Esophagus muscularis mucosa (tissue), 4 donors: ENCODE measurements at regions of chr12 and their contacts with region 1.

Region 1: GRCh38 chr12:111313833-111314259 is 55.0 kb downstream of the PHETA1 start:
- DNase-seq: no peak
- H3K4me3 ChIP-seq: peak overlapping the region in 3 of 4 donors; percentile 1 to 23 (median 3)
- H3K27ac ChIP-seq: no peak overlapping the region
- H3K4me1 ChIP-seq: peaks cover 0 to 5% (median 2%) of the 10 kb centered on the region in 4 donors
- H3K27me3 ChIP-seq: peaks cover 0 to 52% (median 0%) of the 10 kb centered on the region in 4 donors
- CTCF ChIP-seq: peak; percentile 84 to 96 (median 88)
- EP300 ChIP-seq: no peak
- POLR2A ChIP-seq: no peak

Region 2: DNA sequence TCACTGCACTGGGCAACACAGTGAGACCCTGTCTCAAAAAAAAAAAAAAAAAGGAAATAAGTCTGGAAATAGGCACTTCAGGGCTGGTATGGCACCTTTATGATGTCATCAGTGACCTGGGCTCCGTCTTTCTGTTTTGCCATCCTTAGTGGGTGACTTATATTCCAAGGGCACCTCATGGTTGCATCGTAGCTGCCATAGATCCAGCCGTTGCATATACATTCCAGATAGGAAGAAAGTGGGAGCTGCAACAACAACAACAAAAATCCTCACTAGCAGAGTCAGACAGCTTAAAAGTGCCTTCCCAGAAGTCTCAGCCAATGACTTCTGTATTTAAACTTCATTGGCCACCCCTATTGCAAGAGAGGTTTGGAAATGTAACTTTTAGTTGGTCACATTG is 419.9 kb before region 1 on chr12:
- intact Hi-C with region 1: loop called (anchors 2 kb)
- DNase-seq: no peak
- H3K4me3 ChIP-seq: no peak overlapping the region
- H3K27ac ChIP-seq: no peak overlapping the region
- H3K4me1 ChIP-seq: peaks cover 5 to 9% (median 6%) of the 10 kb centered on the region in 4 donors
- H3K27me3 ChIP-seq: peaks cover 0 to 9% (median 0%) of the 10 kb centered on the region in 4 donors
- CTCF ChIP-seq: no peak
- EP300 ChIP-seq: no peak
- POLR2A ChIP-seq: no peak

Region 3: DNA sequence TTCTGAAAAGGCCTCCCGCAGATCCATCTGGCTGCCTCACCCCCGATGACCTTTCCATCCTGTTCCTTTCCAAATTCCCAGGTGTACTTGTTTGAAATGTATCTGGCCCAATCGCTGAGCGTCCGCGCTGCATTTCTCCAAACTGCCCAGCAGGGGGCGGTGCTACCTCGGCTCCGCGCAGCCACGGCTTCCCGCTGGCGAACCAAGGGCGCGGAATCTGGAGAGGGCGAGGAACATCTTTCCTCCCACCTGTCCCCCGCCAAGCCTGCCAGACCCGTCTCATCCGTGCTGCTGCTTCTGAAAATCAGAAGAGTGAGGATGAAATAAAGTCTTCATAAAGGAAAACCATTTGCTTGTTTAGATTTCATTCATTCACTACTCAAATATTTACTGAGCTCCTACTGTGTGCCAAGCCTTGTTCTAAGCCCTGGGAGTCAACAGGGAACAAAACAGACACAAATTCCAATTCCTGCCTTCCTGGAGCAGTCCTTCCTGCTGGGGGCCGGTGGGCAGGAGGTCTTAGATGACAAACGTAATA is 376.7 kb before region 1 on chr12:
- intact Hi-C with region 1: loop called (anchors 5 kb)
- DNase-seq: no peak
- H3K4me3 ChIP-seq: no peak overlapping the region
- H3K27ac ChIP-seq: no peak overlapping the region
- H3K4me1 ChIP-seq: peaks cover 7 to 22% (median 14%) of the 10 kb centered on the region in 4 donors
- H3K27me3 ChIP-seq: peaks cover 0 to 53% (median 0%) of the 10 kb centered on the region in 4 donors
- CTCF ChIP-seq: peak; percentile 86 to 96 (median 90)
- EP300 ChIP-seq: no peak
- POLR2A ChIP-seq: no peak

Region 4: DNA sequence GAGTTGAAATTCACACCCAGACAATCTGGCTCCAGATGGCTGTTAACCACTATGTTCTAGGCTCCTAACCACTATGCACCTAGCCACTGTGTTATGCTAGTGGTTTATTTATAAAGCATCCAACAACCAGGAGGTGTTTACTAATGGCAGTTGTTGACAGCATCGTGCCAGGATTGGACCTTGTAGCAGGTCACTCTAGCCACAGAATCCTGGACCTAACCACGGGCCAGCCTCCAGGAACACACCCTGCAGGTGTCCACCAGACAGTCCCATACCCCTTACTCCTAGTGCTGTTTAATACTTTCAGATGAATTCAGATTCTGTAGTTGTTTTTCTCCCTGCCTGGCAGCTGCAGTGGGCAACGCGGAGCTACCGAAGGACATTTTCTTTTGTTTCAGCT is 284.1 kb before region 1 on chr12:
- intact Hi-C with region 1: loop called (anchors 5 kb)
- DNase-seq: no peak
- H3K4me3 ChIP-seq: no peak overlapping the region
- H3K27ac ChIP-seq: no peak overlapping the region
- H3K4me1 ChIP-seq: peaks cover 6 to 17% (median 16%) of the 10 kb centered on the region in 4 donors
- H3K27me3 ChIP-seq: peaks cover 0 to 95% (median 12%) of the 10 kb centered on the region in 4 donors
- CTCF ChIP-seq: no peak
- EP300 ChIP-seq: no peak
- POLR2A ChIP-seq: no peak

Region 5: GRCh38 chr12:111093428-111094142 is 220.3 kb before region 1 on chr12:
- intact Hi-C with region 1: no loop called
- DNase-seq: no peak
- H3K4me3 ChIP-seq: no peak overlapping the region
- H3K27ac ChIP-seq: no peak overlapping the region
- H3K4me1 ChIP-seq: no peaks in the 10 kb centered on the region
- H3K27me3 ChIP-seq: peaks cover 0 to 48% (median 0%) of the 10 kb centered on the region in 4 donors
- CTCF ChIP-seq: no peak
- EP300 ChIP-seq: no peak
- POLR2A ChIP-seq: no peak